IMR-90 (cell line): ENCODE measurements at regions of chr4 and their contacts with region 1.

Region 1: DNA sequence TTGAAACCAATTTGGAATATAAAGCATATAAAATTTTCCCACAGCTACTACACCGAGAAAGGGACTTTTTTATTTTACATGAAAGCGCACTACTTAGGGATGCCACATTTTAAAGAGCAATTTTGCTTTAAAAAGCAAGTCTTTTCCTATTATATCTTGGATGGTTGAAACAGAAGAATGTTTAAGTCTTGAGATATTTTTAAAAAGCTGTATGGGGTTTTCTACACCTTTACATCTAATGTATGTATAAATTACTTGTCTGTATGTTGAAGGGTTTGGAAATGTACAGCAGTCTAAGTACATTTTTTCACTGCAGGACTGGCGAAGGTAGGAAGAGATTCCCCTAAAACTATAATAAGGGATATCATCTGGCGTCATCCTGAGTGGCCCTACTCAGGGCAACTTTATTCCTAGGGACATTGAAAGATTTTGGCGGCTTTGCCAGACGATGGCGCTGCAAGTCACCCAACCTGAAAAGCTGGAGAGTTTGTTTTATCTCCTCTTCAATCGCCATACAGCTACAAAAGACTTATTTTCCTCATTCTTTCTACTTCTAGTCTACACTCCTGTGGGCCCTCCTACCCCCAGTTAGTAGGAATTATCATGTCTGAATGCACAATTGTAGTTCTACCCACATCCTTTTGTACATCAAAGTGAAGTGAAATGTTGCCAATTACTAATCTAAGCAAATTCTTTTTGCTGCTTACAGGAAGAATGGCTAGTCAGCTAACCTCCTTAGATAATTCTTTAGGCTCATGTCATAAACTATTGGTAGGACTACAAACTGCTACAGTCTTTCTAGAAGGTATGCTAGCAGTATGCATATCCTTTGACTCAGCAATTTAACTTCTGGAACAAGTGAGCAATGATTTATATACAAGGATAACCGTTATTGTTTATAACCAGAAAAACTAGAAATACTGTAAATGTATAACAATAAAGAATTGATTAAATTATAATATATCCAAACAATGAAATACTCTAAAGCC is 782 bp upstream of the NEK1 start:
- DNase-seq: peak; percentile 79
- ATAC-seq: peak; percentile 68
- H3K4me3 ChIP-seq: peak overlapping the region; percentile 93
- H3K27ac ChIP-seq: no peak overlapping the region
- H3K4me1 ChIP-seq: no peaks in the 10 kb centered on the region
- H3K27me3 ChIP-seq: no peaks in the 10 kb centered on the region
- CTCF ChIP-seq: peak; percentile 77
- POLR2A ChIP-seq: no peak; the same call in 1 of the 2 replicates
- RAD21 ChIP-seq: peak; percentile 79

Region 2: GRCh38 chr4:169128902-169129301 is 484.3 kb before region 1 on chr4:
- CTCF ChIA-PET with region 1: no interaction called
- POLR2A ChIA-PET with region 1: no interaction called
- dilution Hi-C with region 1: no loop called
- in situ Hi-C with region 1: no loop called
- intact Hi-C with region 1: no loop called
- DNase-seq: no peak
- ATAC-seq: no peak
- H3K4me3 ChIP-seq: no peak overlapping the region
- H3K27ac ChIP-seq: no peak overlapping the region
- H3K4me1 ChIP-seq: peaks cover 6% of the 10 kb centered on the region; the same call in 1 of the 2 replicates
- H3K27me3 ChIP-seq: no peaks in the 10 kb centered on the region
- CTCF ChIP-seq: no peak
- POLR2A ChIP-seq: no peak
- RAD21 ChIP-seq: no peak

Region 3: GRCh38 chr4:169398316-169398715 is 214.8 kb before region 1 on chr4:
- CTCF ChIA-PET with region 1: no interaction called
- POLR2A ChIA-PET with region 1: no interaction called
- dilution Hi-C with region 1: no loop called
- in situ Hi-C with region 1: no loop called
- intact Hi-C with region 1: no loop called
- DNase-seq: peak; percentile 76
- ATAC-seq: peak; percentile 48
- H3K4me3 ChIP-seq: no peak overlapping the region
- H3K27ac ChIP-seq: no peak overlapping the region
- H3K4me1 ChIP-seq: no peaks in the 10 kb centered on the region; the same call in 1 of the 2 replicates
- H3K27me3 ChIP-seq: no peaks in the 10 kb centered on the region
- CTCF ChIP-seq: no peak
- POLR2A ChIP-seq: no peak
- RAD21 ChIP-seq: no peak

Region 4: DNA sequence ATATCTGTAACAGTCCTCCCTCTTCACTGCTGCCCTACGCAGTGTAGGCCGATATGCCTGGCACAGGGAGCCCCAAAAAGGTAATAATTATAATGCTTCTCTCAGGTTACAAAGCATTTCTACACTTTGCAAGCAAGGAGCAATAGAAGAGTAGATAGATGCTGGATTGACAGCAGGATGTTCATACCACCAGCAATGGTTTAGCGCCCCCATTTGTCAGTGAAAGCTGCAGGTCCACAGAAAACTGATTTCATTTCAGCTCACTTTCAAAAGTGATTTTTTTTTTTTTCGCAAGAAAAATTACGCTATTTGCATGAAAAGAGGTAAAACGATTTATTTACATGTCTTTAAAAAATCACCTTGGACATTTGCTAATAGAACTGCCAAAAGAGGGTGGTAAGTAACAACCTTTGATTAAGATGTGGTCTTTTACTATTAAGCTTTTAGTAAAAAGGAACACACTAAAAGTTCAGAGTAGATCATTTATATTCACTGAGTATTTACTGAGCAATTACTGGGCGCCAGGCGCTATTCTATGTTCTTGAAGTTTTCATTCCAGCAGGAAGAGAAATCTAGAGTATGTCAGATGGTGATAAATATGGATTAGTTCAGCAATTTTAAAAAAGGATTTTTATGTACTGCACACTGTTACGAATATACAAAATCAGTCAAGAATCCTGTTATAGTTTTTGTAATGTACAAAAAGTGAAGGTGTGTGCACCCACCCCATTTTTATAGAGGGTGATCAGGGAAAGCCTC is 110.2 kb after region 1 on chr4:
- CTCF ChIA-PET with region 1: interaction called, 3 read pairs
- POLR2A ChIA-PET with region 1: interaction called, 10 read pairs
- dilution Hi-C with region 1: no loop called
- in situ Hi-C with region 1: no loop called
- intact Hi-C with region 1: loop called (anchors 1 kb)
- DNase-seq: no peak
- ATAC-seq: no peak; the same call in 1 of the 2 replicates
- H3K4me3 ChIP-seq: no peak overlapping the region
- H3K27ac ChIP-seq: no peak overlapping the region
- H3K4me1 ChIP-seq: peaks cover 5% of the 10 kb centered on the region; the same call in 1 of the 2 replicates
- H3K27me3 ChIP-seq: no peaks in the 10 kb centered on the region
- CTCF ChIP-seq: 0 out of 2 replicates have a peak, but pooled peaks have one; percentile 15
- POLR2A ChIP-seq: no peak
- RAD21 ChIP-seq: no peak

Region 5: GRCh38 chr4:169745291-169745690 is 132.1 kb after region 1 on chr4:
- CTCF ChIA-PET with region 1: no interaction called
- POLR2A ChIA-PET with region 1: no interaction called
- dilution Hi-C with region 1: no loop called
- in situ Hi-C with region 1: no loop called
- intact Hi-C with region 1: no loop called
- DNase-seq: peak; percentile 65
- ATAC-seq: peak; percentile 63
- H3K4me3 ChIP-seq: no peak overlapping the region
- H3K27ac ChIP-seq: no peak overlapping the region
- H3K4me1 ChIP-seq: peaks cover 5% of the 10 kb centered on the region
- H3K27me3 ChIP-seq: no peaks in the 10 kb centered on the region
- CTCF ChIP-seq: no peak
- POLR2A ChIP-seq: no peak
- RAD21 ChIP-seq: no peak

Region 6: GRCh38 chr4:169791527-169792156 is 178.5 kb after region 1 on chr4:
- CTCF ChIA-PET with region 1: no interaction called
- POLR2A ChIA-PET with region 1: no interaction called
- dilution Hi-C with region 1: no loop called
- in situ Hi-C with region 1: no loop called
- intact Hi-C with region 1: loop called (anchors 1 kb)
- DNase-seq: peak; percentile 55
- ATAC-seq: peak; percentile 92
- H3K4me3 ChIP-seq: peak overlapping the region; percentile 18
- H3K27ac ChIP-seq: no peak overlapping the region
- H3K4me1 ChIP-seq: no peaks in the 10 kb centered on the region
- H3K27me3 ChIP-seq: peaks cover 2% of the 10 kb centered on the region
- CTCF ChIP-seq: peak; percentile 56
- POLR2A ChIP-seq: no peak
- RAD21 ChIP-seq: peak; percentile 16; the same call in 1 of the 2 replicates

Region 7: GRCh38 chr4:170027181-170027829 is 414.1 kb after region 1 on chr4:
- CTCF ChIA-PET with region 1: no interaction called
- POLR2A ChIA-PET with region 1: no interaction called
- dilution Hi-C with region 1: no loop called
- in situ Hi-C with region 1: no loop called
- intact Hi-C with region 1: loop called (anchors 5 kb)
- DNase-seq: peak; percentile 95
- ATAC-seq: peak; percentile 82
- H3K4me3 ChIP-seq: peak overlapping the region; percentile 68
- H3K27ac ChIP-seq: no peak overlapping the region
- H3K4me1 ChIP-seq: 0 out of 2 replicates have a peak, but pooled peaks cover 2% of the 10 kb centered on the region
- H3K27me3 ChIP-seq: peaks cover 22% of the 10 kb centered on the region
- CTCF ChIP-seq: no peak
- POLR2A ChIP-seq: no peak
- RAD21 ChIP-seq: no peak

Region 8: GRCh38 chr4:170089668-170090351 is 476.6 kb after region 1 on chr4 and contains the start of gene AADAT:
- CTCF ChIA-PET with region 1: no interaction called
- POLR2A ChIA-PET with region 1: no interaction called
- dilution Hi-C with region 1: no loop called
- in situ Hi-C with region 1: no loop called
- intact Hi-C with region 1: loop called (anchors 5 kb)
- DNase-seq: peak; percentile 72
- ATAC-seq: peak; percentile 96
- H3K4me3 ChIP-seq: peak within 1 kb of the TSS; percentile 67
- H3K27ac ChIP-seq: peak within 1 kb of the TSS; percentile 58
- H3K4me1 ChIP-seq: no peaks in the 10 kb centered on the region
- H3K27me3 ChIP-seq: no peaks in the 10 kb centered on the region
- CTCF ChIP-seq: peak; percentile 79
- POLR2A ChIP-seq: no peak
- RAD21 ChIP-seq: peak; percentile 67
- total RNA-seq, gene AADAT: 4.7 TPM in 2 replicates